ENCODE measurements at regions of chr11 and their contacts with region 1.

Region 1: DNA sequence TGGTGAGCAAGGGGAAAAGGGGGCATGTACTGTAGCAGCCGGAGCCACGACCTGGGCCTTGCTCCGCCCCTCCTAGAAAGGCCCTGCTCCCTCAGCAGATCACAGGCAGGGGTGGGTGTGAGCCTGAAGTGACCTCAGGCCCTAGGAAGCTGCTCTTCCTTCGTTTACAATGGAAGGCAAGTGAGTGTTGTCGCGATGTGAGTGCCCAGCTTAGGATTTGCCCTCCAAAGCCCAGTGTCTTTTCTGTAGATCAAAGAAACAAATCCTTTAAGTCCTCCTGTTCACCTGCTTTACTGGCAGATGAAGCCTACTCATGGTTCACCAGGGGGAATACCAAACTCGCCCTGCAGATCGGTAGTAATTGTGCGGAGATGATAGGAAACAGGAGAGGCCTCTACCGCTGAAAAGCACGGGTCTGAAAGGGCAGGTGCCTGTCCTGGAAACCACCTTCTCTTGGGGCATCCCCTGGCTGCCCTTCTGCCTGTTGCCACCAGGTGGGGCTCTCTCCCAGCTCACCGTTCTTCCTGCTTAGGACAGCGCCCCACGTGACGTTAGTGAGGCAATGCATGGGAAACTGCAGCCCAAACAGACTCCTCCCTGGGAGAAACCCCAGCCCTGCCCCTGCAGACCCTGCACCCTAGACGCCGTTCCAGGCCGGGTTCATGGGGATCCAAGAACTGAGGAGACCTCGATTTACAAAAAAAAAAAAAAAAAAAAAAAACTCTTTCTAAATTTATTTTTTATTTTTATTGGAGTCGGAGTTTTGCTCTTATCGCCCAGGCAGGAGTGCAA is 45.9 kb upstream of the RAB1B start:
- DNase-seq: peak; percentile 58 to 94
- H3K4me3 ChIP-seq: peak overlapping the region in 1 of 2 donors; percentile 19
- H3K27ac ChIP-seq: no peak overlapping the region
- H3K4me1 ChIP-seq: no peaks in the 10 kb centered on the region
- H3K27me3 ChIP-seq: no peaks in the 10 kb centered on the region
- CTCF ChIP-seq: peak; percentile 97 to 99 (median 99)

Region 2: DNA sequence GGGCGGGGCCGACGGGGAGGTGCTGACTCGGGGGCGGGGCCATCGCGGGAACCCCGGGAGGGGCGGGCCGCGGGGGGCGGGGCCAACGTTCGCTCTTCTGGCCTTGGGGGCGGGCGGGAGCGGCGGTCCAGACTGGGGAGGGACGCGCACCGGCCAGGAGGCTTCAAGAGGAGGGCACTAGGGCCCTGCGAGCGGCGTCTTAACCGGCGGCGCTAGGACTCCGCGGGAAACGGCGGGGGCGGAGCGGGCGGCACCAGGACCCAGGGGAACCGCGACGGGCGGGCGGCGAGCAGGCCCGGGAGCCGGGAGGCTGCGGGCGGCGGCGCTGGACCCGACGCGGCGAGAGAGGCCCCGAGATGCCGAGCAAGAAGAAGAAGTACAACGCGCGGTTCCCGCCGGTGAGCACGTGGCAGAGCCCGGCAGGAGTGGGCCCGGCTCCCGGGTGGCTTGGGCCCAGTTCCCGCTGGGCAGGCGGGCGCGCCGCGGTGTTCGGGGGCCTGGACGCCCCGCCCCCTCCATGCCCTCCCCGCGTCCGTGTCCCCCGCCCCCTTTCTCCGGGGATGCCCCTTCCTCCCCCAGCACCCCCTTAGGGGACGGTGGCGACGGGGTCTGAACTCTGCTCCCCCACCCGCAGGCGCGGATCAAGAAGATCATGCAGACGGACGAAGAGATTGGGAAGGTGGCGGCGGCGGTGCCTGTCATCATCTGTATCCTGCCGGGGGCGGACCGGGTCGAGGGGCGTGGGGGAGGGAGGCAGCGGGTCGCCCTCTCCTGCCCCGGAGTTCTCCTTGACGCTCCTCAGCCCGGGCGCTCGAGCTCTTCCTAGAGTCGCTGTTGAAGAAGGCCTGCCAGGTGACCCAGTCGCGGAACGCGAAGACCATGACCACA is 303.2 kb before region 1 on chr11 and contains the start of gene DRAP1:
- intact Hi-C with region 1: no loop called
- DNase-seq: peak; percentile 93 to 99
- H3K4me3 ChIP-seq: peak within 1 kb of the TSS; percentile 79 to 98
- H3K27ac ChIP-seq: peak within 1 kb of the TSS; percentile 96 to 98
- H3K4me1 ChIP-seq: peaks cover 43 to 45% of the 10 kb centered on the region in 2 donors
- H3K27me3 ChIP-seq: no peaks in the 10 kb centered on the region
- CTCF ChIP-seq: peak in 1 of 3 experiments; percentile 2
- total RNA-seq, gene DRAP1: 135 TPM

Region 3: GRCh38 chr11:66258473-66258893 is 35.9 kb after region 1 on chr11:
- intact Hi-C with region 1: loop called (anchors 1 kb)
- DNase-seq: no peak
- H3K4me3 ChIP-seq: peak overlapping the region; percentile 90 to 91
- H3K27ac ChIP-seq: peak overlapping the region; percentile 76 to 78
- H3K4me1 ChIP-seq: peaks cover 8 to 9% of the 10 kb centered on the region in 2 donors
- H3K27me3 ChIP-seq: no peaks in the 10 kb centered on the region
- CTCF ChIP-seq: no peak

Region 4: GRCh38 chr11:66282468-66283386 is 60.2 kb after region 1 on chr11:
- intact Hi-C with region 1: loop called (anchors 1 kb)
- DNase-seq: peak; percentile 92 to 99
- H3K4me3 ChIP-seq: no peak overlapping the region
- H3K27ac ChIP-seq: no peak overlapping the region
- H3K4me1 ChIP-seq: peaks cover 2 to 22% of the 10 kb centered on the region in 2 donors
- H3K27me3 ChIP-seq: no peaks in the 10 kb centered on the region
- CTCF ChIP-seq: peak; percentile 96 to 99 (median 98)